ENCODE measurements at regions of chr2 and their contacts with region 1.

Region 1: GRCh38 chr2:131056204-131056931 is 36.9 kb downstream of the FAM168B start:
- DNase-seq: no peak
- H3K4me3 ChIP-seq: no peak overlapping the region
- H3K27ac ChIP-seq: no peak overlapping the region
- H3K4me1 ChIP-seq: peaks cover 0 to 2% (median 0%) of the 10 kb centered on the region in 4 experiments; a peak in 1 of 7 replicates
- H3K27me3 ChIP-seq: no peaks in the 10 kb centered on the region
- CTCF ChIP-seq: no peak
- EP300 ChIP-seq: no peak
- POLR2A ChIP-seq: no peak
- RAD21 ChIP-seq: no peak

Region 2: DNA sequence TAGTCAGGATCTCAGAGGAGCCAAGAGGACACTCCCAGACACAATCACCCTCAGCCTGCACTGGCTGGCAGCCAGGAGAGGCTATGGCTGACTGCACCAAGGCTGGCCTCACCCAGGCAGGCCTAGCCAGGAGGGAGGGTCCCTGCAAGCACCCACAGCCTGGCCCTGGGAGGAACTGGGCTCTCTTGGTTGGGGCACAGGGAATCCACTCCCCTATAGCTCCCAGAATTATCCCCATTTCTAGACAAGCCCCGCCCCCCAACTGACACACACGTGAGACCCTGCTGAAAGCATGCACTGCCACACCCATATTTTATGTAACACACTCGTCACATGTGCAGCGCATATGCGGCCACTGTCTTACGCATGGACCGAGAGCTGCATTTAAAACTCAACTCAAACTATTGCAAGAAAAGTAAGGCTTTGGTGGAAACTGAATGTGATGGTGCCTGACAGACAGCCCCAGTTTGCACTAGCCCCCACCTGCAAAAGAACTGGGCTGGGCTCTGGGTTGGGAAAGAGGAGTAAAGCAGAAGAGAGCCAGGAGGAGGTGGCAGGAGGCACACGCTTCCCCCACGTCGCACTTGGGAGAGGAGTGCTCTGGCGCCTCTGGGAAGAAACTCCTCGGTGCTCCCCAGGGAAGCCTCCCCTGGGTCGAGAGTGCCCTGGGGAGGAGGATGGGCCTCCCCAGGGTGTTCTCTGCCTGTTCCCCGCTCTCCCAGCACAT is 248.5 kb before region 1 on chr2:
- CTCF ChIA-PET with region 1: no interaction called
- POLR2A ChIA-PET with region 1: no interaction called
- DNase-seq: no peak
- H3K4me3 ChIP-seq: no peak overlapping the region
- H3K27ac ChIP-seq: no peak overlapping the region
- H3K4me1 ChIP-seq: peaks cover 0 to 2% (median 0%) of the 10 kb centered on the region in 4 experiments; a peak in 1 of 7 replicates
- H3K27me3 ChIP-seq: no peaks in the 10 kb centered on the region
- CTCF ChIP-seq: no peak
- EP300 ChIP-seq: no peak
- POLR2A ChIP-seq: no peak
- RAD21 ChIP-seq: no peak

Region 3: GRCh38 chr2:131040661-131041401 is 15.5 kb before region 1 on chr2:
- CTCF ChIA-PET with region 1: interaction called, 12 read pairs
- POLR2A ChIA-PET with region 1: interaction called, 4 read pairs
- DNase-seq: no peak
- H3K4me3 ChIP-seq: no peak overlapping the region
- H3K27ac ChIP-seq: no peak overlapping the region
- H3K4me1 ChIP-seq: peaks cover 0 to 5% (median 0%) of the 10 kb centered on the region in 4 experiments; a peak in 3 of 7 replicates
- H3K27me3 ChIP-seq: peaks cover 0 to 8% (median 4%) of the 10 kb centered on the region in 4 experiments; a peak in 5 of 7 replicates
- CTCF ChIP-seq: peak in 2 of 3 experiments; percentile 36 to 37; a peak in 3 of 4 replicates
- EP300 ChIP-seq: no peak
- POLR2A ChIP-seq: no peak
- RAD21 ChIP-seq: peak in 1 of 2 experiments; percentile 19; a peak in 1 of 4 replicates

Region 4: GRCh38 chr2:131076707-131077106 is 20.3 kb after region 1 on chr2:
- CTCF ChIA-PET with region 1: interaction called, 3 read pairs
- POLR2A ChIA-PET with region 1: interaction called, 11 read pairs
- DNase-seq: no peak
- H3K4me3 ChIP-seq: no peak overlapping the region
- H3K27ac ChIP-seq: no peak overlapping the region; the same call in 1 of the 2 replicates
- H3K4me1 ChIP-seq: peaks cover 0 to 4% (median 2%) of the 10 kb centered on the region in 4 experiments; a peak in 3 of 7 replicates
- H3K27me3 ChIP-seq: no peaks in the 10 kb centered on the region
- CTCF ChIP-seq: no peak
- EP300 ChIP-seq: no peak
- POLR2A ChIP-seq: no peak
- RAD21 ChIP-seq: no peak

Measured in H1 (cell line).